ENCODE measurements at regions of chr11 and their contacts with region 1.

Region 1: GRCh38 chr11:34468209-34468841 is 29.6 kb downstream of the CAT start:
- DNase-seq: peak; percentile 56
- H3K4me3 Mint-ChIP-seq: no peak overlapping the region
- H3K27ac Mint-ChIP-seq: no peak overlapping the region
- H3K4me1 Mint-ChIP-seq: peaks cover 6% of the 10 kb centered on the region
- H3K27me3 Mint-ChIP-seq: no peaks in the 10 kb centered on the region

Region 2: GRCh38 chr11:34280945-34281872 is 187.1 kb before region 1 on chr11:
- CTCF ChIA-PET with region 1: no interaction called
- POLR2A ChIA-PET with region 1: no interaction called
- DNase-seq: no peak
- H3K4me3 Mint-ChIP-seq: no peak overlapping the region
- H3K27ac Mint-ChIP-seq: no peak overlapping the region
- H3K4me1 Mint-ChIP-seq: no peaks in the 10 kb centered on the region
- H3K27me3 Mint-ChIP-seq: no peaks in the 10 kb centered on the region

Region 3: GRCh38 chr11:34366522-34366921 is 101.8 kb before region 1 on chr11:
- CTCF ChIA-PET with region 1: interaction called, 14 read pairs
- POLR2A ChIA-PET with region 1: no interaction called
- DNase-seq: peak; percentile 24
- H3K4me3 Mint-ChIP-seq: no peak overlapping the region
- H3K27ac Mint-ChIP-seq: no peak overlapping the region
- H3K4me1 Mint-ChIP-seq: peaks cover 8% of the 10 kb centered on the region
- H3K27me3 Mint-ChIP-seq: peaks cover 42% of the 10 kb centered on the region

Region 4: GRCh38 chr11:34480314-34480713 is 12.0 kb after region 1 on chr11:
- CTCF ChIA-PET with region 1: interaction called, 10 read pairs
- POLR2A ChIA-PET with region 1: interaction called, 3 read pairs
- DNase-seq: no peak
- H3K4me3 Mint-ChIP-seq: no peak overlapping the region
- H3K27ac Mint-ChIP-seq: no peak overlapping the region
- H3K4me1 Mint-ChIP-seq: no peaks in the 10 kb centered on the region
- H3K27me3 Mint-ChIP-seq: peaks cover 11% of the 10 kb centered on the region

Measured in activated CD4-positive, alpha-beta memory T cell treated with anti-CD3 and anti-CD28 coated beads, Interleukin-2, amount 10 ng/mL, durations not matched to agents 7 days and 5 days (primary cell).